Motor neuron (in vitro differentiated cells): ENCODE measurements at regions of chr9 and their contacts with region 1.

Region 1: DNA sequence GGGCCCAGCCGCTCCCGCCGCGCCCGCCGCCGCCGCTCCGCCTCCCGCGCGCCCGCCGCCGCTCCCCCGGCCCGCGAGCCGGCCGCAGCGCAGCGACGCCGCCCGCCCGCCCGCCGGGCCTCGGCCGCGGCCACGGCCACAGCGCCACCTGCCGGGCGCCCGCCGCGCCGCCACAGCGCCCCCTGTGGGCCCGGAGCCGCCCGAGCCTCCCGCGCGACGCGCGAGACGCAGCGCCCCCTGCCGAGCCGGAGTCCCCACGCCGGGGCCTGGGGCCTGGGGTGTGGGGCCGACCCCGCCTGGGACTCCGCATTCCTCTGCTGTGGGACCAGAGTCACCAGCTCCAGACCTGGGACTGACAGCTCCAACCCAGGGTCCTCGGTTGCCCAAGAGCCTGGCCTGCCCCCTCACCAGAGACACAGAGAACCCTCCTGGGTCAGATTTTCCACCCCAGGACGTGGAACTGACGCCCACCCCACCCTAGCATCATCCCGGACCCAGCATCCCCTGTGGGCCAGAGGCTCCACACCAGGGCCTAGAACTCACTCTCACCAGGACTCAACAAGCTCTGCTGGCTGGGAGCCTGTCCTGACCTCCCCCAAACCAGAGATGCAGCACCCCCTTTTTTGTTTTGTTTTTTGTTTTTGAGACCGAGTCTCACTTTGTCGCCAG is at the start of gene RAPGEF1:
- ATAC-seq: peak; percentile 74 to 88 (median 77)
- H3K4me3 ChIP-seq: peak within 1 kb of the TSS; percentile 78 to 97 (median 87)
- H3K27ac ChIP-seq: peak within 1 kb of the TSS; percentile 45 to 64
- H3K4me1 ChIP-seq: peaks cover 7 to 10% of the 10 kb centered on the region in 2 donors
- total RNA-seq, gene RAPGEF1: 15.4 to 42.0 (median 24.9) TPM

Region 2: DNA sequence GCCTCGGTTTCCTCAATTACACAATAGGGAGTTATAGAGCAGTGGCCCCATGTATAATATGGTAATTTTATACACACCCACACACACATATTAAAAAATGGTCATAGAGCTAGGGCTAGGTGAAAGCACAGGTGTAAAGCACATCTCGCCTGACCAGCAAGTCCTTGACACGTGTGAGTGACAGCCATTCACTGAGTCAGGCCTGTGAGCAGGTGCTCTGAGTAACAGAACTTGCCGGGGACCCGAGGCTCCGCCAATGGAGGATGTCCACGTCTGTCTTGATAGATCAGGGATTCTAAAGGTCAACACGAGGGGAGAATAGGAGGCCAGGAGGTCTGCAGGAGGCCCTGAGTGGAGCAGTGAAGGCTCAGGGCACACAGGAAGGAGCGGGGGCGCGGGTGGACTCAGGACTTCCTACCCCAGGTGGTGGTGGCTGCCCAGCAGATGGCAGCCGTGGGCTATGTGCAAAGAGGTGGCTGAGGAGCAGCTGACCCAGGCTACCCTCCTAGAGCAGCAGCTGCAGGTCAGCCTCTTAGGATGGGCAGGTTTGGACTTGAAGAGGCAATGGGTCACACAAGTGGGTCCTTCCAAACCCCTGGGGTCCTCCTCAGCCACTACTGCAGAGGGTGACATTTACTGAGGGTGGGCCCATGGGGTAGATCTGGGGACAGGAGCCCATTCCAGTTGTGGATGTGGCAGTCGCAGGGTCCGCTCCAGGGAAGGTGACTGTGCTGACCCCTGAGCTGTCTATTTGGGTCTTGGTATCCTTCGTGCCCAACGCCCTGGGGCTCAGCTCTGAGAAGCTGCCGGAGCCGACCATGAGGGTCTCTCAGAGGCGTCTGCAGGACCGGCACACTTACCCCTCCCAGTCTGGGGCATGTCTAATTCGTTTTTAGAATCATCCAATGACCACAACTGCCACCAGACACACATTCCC is 148.9 kb before region 1 on chr9:
- in situ Hi-C with region 1: loop called in 5 of 9 experiments (anchors 10 to 25 kb)
- ATAC-seq: peak; percentile 80 to 96 (median 89)
- H3K4me3 ChIP-seq: no peak overlapping the region
- H3K27ac ChIP-seq: no peak overlapping the region
- H3K4me1 ChIP-seq: no peaks in the 10 kb centered on the region

Region 3: DNA sequence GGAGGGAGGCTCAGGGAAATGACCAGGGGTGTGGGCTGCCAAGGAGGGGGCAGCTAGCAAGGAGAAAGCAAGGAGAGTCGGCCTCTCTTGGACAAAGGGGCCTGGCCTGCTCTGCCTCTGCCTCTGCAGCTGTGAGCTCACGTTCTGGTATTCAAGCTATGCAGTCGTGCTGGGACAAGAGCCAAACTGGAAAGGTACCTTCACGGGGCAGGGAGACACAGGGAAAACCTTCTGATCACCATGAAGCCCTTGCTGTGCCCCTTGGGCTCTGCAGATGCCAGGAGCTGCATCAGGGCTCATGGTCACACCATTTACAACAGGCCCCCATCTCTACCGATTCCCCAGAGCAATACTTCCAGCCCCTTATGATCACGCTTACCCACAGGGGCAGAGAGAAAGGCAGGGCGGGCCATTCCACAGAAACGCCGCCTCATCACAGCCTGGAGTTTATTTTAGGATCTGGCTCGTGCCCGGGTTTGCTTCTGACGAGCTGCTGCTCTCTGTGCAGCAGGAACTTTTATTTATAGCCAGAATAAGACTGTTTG is 131.5 kb before region 1 on chr9:
- in situ Hi-C with region 1: loop called in 1 of 9 experiments (anchors 25 kb)
- ATAC-seq: peak; percentile 1 to 90 (median 52)
- H3K4me3 ChIP-seq: no peak overlapping the region
- H3K27ac ChIP-seq: no peak overlapping the region
- H3K4me1 ChIP-seq: peaks cover 3 to 6% of the 10 kb centered on the region in 2 donors